Prostate gland (tissue), 2 donors: ENCODE measurements at regions of chr15 and their contacts with region 1.

Region 1: DNA sequence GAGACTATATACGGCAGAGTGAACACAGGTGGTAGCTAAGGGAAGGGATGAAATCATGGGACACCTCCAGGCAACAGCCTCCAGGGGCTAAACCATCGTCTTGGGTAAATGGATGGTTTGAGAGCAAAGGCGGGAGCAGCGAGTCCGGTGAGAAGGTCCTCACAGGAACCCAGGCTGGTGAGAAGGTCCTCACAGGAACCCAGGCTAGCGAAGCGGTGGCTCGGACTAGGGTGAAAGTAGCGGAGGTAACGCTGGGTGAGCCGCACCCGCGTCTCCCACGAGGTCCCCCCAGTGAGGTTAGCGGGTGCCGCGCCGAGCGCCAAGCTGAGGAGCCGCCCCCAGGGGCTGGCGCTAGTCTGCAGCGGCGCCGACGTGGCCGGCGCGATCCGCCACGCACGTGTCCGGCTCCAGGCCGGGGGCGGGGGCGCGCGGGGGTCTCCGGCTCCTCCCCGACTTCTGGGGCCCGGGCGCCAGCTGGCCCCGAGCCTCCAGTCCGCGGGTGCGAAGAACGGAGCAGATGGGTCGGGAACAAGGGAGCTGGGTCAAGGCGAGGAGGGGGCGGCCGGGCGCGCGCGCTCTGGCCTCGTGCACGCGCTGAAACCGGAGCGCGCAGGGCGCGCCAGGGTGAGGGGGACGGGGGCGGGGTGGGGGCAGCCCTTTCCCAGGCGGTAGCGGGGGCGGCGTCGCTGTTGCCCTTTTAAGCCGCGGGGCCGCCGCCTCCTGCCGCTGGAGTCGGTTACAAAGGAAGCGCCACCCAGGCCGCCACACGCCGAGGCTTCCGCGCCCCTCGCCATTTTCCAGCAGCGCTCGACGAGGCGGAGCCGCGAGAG is at the start of gene UBE2Q2:
- DNase-seq: peak; percentile 66
- H3K4me3 ChIP-seq: peak within 1 kb of the TSS; percentile 81 to 82
- H3K27ac ChIP-seq: peak within 1 kb of the TSS; percentile 88 to 89
- H3K4me1 ChIP-seq: peaks cover 8% of the 10 kb centered on the region
- H3K27me3 ChIP-seq: no peaks in the 10 kb centered on the region
- CTCF ChIP-seq: peak in 1 of 4 experiments; percentile 13
- POLR2A ChIP-seq: no peak
- total RNA-seq, gene UBE2Q2: 33.1 to 67.5 TPM

Region 2: GRCh38 chr15:75903331-75904239 is 60.6 kb after region 1 on chr15 and contains the start of gene FBXO22:
- intact Hi-C with region 1: loop called (anchors 5 kb)
- DNase-seq: peak; percentile 91
- H3K4me3 ChIP-seq: peak within 1 kb of the TSS; percentile 73 to 85
- H3K27ac ChIP-seq: peak within 1 kb of the TSS; percentile 86
- H3K4me1 ChIP-seq: peaks cover 4% of the 10 kb centered on the region
- H3K27me3 ChIP-seq: no peaks in the 10 kb centered on the region
- CTCF ChIP-seq: no peak
- POLR2A ChIP-seq: peak; percentile 67
- total RNA-seq, gene FBXO22: 10.8 to 34.7 TPM